ENCODE measurements at regions of chr7 and their contacts with region 1.

Region 1: GRCh38 chr7:158716802-158717201 is 12.2 kb upstream of the NCAPG2 start:
- DNase-seq: no peak
- H3K4me3 Mint-ChIP-seq: no peak overlapping the region
- H3K27ac Mint-ChIP-seq: no peak overlapping the region
- H3K4me1 Mint-ChIP-seq: no peaks in the 10 kb centered on the region
- H3K27me3 Mint-ChIP-seq: peaks cover 37% of the 10 kb centered on the region
- CTCF ChIP-seq: no peak

Region 2: GRCh38 chr7:158252072-158252836 is 464.5 kb before region 1 on chr7:
- CTCF ChIA-PET with region 1: no interaction called
- POLR2A ChIA-PET with region 1: no interaction called
- intact Hi-C with region 1: no loop called
- DNase-seq: no peak
- H3K4me3 Mint-ChIP-seq: no peak overlapping the region
- H3K27ac Mint-ChIP-seq: no peak overlapping the region
- H3K4me1 Mint-ChIP-seq: no peaks in the 10 kb centered on the region
- H3K27me3 Mint-ChIP-seq: no peaks in the 10 kb centered on the region
- CTCF ChIP-seq: no peak

Region 3: DNA sequence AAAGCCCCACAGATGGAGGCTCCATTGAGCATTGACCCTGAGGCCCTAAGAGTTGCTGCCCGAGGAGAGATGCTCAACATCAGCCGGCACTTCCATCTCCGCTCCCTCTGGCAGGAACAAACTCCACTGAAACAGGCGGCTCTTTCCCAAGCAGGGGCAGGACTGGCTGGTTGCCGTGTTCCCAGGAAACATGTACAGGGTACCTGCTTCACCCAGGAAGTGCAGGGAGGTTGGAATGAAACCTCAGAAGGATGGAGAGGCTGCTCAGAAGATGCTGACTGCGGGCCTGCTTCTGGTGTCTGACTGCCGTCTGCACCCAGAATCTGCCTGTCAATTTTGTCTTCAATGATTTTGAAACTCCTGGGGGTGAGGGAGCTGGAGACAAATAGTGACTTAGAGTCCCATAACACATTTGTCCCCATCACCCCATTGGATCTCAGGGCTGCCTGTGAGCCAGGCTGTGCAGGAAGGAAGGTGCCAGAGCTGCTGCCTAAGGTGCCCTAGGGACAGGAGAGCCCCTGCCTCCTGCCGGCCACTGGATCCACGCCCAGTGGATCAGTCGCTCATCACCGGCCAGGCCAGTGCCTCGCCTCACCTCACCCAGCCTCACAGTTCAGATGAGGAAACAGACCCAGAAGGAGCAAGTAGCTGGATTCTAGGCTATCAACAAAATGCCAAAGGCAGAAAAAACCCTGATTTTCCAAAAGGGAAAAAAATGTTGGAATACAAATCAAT is 366.5 kb before region 1 on chr7:
- CTCF ChIA-PET with region 1: no interaction called
- POLR2A ChIA-PET with region 1: no interaction called
- intact Hi-C with region 1: no loop called
- DNase-seq: no peak
- H3K4me3 Mint-ChIP-seq: no peak overlapping the region
- H3K27ac Mint-ChIP-seq: no peak overlapping the region
- H3K4me1 Mint-ChIP-seq: no peaks in the 10 kb centered on the region
- H3K27me3 Mint-ChIP-seq: peaks cover 16% of the 10 kb centered on the region
- CTCF ChIP-seq: no peak

Region 4: DNA sequence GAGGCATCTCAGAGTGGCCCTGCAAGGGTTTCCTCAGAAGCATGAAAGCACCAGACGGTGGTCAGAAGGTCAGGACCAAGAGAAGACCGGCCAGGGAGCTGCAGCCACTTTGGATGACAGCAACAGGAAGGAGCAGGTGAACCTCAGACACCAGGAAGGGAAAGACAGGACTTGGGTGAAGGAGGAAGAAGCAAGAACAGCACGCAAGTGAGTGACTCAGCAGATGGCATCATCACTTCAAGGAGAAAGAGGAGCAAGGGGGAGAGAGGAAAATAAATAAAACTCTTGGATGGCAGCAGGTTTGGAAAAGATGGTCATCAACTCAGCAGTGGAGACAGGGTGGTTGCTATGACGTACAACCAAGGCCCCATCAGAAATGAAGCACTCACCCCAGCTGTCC is 43.8 kb before region 1 on chr7:
- CTCF ChIA-PET with region 1: no interaction called
- POLR2A ChIA-PET with region 1: no interaction called
- intact Hi-C with region 1: no loop called
- DNase-seq: peak; percentile 44
- H3K4me3 Mint-ChIP-seq: no peak overlapping the region
- H3K27ac Mint-ChIP-seq: no peak overlapping the region
- H3K4me1 Mint-ChIP-seq: peaks cover 6% of the 10 kb centered on the region
- H3K27me3 Mint-ChIP-seq: no peaks in the 10 kb centered on the region
- CTCF ChIP-seq: no peak

Region 5: DNA sequence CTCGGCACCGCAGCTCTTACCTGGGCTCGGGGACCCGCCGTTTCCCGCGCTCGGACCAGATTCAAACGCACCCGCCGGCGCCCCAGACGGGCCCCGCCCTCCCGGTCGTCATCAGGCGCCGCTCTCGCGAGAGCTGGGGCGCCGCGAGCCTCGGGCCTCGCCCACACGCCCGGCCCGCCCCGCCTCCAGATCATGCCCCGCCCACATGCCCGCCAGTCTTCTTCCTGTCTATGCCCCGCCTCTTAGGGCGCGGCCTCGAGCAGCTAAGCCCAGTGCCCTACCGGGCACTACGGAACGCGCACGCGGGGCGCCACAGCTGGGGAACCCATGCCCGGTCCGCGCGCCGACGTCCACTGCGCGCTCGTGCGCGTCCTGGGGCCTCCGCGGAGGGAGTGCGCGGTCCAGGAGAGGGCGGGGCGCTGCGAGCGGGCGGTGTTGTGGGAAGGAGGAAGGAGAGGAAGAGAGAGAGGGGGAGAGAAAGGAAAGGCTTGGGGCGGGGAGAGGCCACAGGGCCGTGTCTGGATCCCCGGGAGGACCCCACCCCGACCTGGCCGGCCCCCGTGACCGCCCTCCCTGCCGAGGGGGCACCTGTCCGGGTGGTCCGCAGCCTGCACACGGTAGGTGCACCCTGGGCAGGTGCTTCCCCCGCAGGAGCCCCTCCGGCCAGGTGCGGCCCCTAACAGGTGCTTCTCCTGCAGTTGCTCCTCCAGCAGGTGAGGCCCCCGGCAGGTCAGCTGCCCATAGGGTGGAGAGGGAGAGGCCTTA is 11.9 kb before region 1 on chr7 and contains the start of gene NCAPG2:
- CTCF ChIA-PET with region 1: interaction called, 4 read pairs
- POLR2A ChIA-PET with region 1: interaction called, 17 read pairs
- intact Hi-C with region 1: no loop called
- DNase-seq: peak; percentile 98
- H3K4me3 Mint-ChIP-seq: peak within 1 kb of the TSS; percentile 88
- H3K27ac Mint-ChIP-seq: peak within 1 kb of the TSS; percentile 86
- H3K4me1 Mint-ChIP-seq: peaks cover 26% of the 10 kb centered on the region
- H3K27me3 Mint-ChIP-seq: no peaks in the 10 kb centered on the region
- CTCF ChIP-seq: no peak
- total RNA-seq, gene NCAPG2: 10.5 and 27.4 TPM in 2 replicates

Measured in MCF 10A (cell line).